Psoas muscle (tissue), 8 donors: ENCODE measurements at regions of chr1 and their contacts with region 1.

Region 1: DNA sequence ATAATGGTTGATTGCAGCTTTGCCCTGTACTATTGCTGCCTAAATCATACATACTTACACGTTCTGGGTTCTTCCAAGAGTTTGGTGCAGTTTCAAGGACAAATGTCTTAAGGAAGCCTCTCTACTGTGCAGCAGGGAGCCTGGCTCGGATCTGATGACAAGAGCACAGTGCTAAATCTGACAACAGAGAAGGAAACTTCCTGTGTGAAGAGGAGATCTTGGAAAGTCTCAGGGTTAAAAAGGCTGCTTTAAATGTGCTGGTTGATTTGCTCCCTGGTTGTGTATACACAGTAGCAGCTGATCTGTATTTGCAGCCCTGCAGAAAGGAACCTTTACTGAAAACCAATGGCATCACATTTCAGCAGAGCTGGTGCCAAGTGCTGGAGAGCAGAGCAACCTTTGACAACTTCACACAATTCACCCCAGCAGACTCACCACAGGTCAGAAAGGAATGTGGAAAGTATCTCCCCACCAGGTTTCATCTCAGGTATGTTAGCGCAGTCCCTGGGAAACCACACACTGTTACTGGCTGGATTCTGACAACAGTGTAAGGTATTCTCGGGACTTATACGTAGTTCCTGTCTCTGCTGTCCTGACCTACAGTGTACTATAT is 355.0 kb upstream of the ESRRG start:
- DNase-seq: no peak
- ATAC-seq: peak; percentile 64 to 79 (median 70)
- H3K4me3 ChIP-seq: peak overlapping the region; percentile 54
- H3K27ac ChIP-seq: peak overlapping the region; percentile 54
- H3K4me1 ChIP-seq: peaks cover 4% of the 10 kb centered on the region
- H3K27me3 ChIP-seq: no peaks in the 10 kb centered on the region
- CTCF ChIP-seq: no peak

Region 2: GRCh38 chr1:216749232-216749631 is 329.0 kb before region 1 on chr1:
- intact Hi-C with region 1: loop called in 1 of 2 experiments (anchors 5 kb)
- DNase-seq: peak in 1 of 2 donors; percentile 45
- ATAC-seq: peak; percentile 45 to 90 (median 71)
- H3K4me3 ChIP-seq: no peak overlapping the region
- H3K27ac ChIP-seq: peak overlapping the region; percentile 27
- H3K4me1 ChIP-seq: peaks cover 10% of the 10 kb centered on the region
- H3K27me3 ChIP-seq: no peaks in the 10 kb centered on the region
- CTCF ChIP-seq: no peak